A673 (cell line): ENCODE measurements at regions of chr15 and their contacts with region 1.

Region 1: DNA sequence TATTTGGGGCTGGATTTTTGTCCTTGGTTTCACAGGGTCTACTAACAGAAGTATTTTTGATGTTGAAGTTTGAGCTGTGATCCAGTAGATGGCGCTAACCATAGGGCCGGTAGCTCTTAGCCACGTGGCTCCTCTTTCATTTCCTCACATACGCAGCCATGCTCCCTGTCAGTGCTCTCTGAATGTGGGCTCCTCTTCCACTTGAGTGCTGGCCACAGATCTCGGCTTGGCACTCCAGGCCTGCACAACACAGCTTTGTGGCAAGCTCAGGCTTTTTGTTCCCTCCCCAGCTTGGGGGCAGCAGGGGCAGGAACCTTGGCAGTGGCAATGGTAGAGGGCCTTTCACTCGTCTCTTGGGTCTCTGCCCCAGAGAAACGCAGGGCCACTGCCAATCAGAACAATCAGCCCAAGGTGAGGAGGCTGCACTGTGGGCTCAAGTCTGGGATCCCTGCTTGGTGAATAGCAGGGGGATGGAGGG is 18.6 kb upstream of the DNAAF4 start:
- DNase-seq: peak; percentile 77
- H3K4me3 ChIP-seq: no peak overlapping the region
- H3K27ac ChIP-seq: no peak overlapping the region
- H3K4me1 ChIP-seq: no peaks in the 10 kb centered on the region
- H3K27me3 ChIP-seq: peaks cover 3% of the 10 kb centered on the region
- CTCF ChIP-seq: peak; percentile 77

Region 2: DNA sequence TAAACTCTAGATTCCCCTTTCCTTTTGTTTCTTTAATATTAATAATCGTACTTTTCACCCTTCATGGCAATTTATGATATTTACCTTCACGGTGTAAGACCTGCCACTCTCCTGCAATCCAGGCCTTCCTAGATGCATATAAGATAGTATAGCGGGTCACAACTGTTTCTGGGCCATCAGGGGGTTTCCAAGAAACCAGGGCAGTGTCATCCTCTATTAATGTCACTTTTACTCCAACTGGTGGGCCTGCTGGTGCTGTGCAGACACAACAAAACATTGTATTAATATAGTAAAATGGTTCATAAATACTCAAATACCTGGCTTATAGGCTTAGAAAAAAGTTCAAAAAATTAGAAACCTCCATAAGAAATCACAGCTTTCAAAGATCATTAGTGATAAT is 110.5 kb after region 1 on chr15:
- CTCF ChIA-PET with region 1: interaction called, 6 read pairs
- POLR2A ChIA-PET with region 1: no interaction called
- intact Hi-C with region 1: loop called (anchors 2 kb)
- DNase-seq: no peak
- H3K4me3 ChIP-seq: no peak overlapping the region
- H3K27ac ChIP-seq: no peak overlapping the region
- H3K4me1 ChIP-seq: no peaks in the 10 kb centered on the region
- H3K27me3 ChIP-seq: no peaks in the 10 kb centered on the region
- CTCF ChIP-seq: no peak

Region 3: DNA sequence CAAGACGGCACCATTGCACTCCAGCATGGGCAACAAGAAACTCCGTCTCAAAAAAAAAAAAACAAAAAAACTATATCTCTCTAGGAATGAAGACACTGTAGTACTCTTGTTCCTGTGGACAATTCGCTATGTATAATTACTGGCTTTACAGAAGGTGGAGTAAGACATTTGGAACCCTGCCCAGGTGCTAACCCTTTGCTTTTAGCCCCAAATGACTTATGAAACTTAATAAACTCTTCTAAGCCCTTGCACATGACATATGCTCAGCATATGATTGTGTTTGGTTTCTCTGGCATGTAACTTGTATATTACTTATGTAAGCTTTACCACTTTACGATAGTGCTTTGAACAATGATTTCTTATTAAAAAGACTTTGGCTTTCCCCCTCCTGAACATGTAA is 243.7 kb after region 1 on chr15:
- CTCF ChIA-PET with region 1: no interaction called
- POLR2A ChIA-PET with region 1: no interaction called
- intact Hi-C with region 1: no loop called
- DNase-seq: no peak
- H3K4me3 ChIP-seq: no peak overlapping the region
- H3K27ac ChIP-seq: no peak overlapping the region
- H3K4me1 ChIP-seq: peaks cover 6% of the 10 kb centered on the region
- H3K27me3 ChIP-seq: no peaks in the 10 kb centered on the region
- CTCF ChIP-seq: no peak

Region 4: GRCh38 chr15:55799291-55800212 is 273.0 kb after region 1 on chr15:
- CTCF ChIA-PET with region 1: interaction called, 4 read pairs
- POLR2A ChIA-PET with region 1: no interaction called
- intact Hi-C with region 1: loop called (anchors 10 kb)
- DNase-seq: peak; percentile 69
- H3K4me3 ChIP-seq: no peak overlapping the region
- H3K27ac ChIP-seq: no peak overlapping the region
- H3K4me1 ChIP-seq: no peaks in the 10 kb centered on the region
- H3K27me3 ChIP-seq: no peaks in the 10 kb centered on the region
- CTCF ChIP-seq: peak; percentile 82